Naive thymus-derived CD8-positive, alpha-beta T cell (primary cell): ENCODE measurements at regions of chr16 and their contacts with region 1.

Region 1: DNA sequence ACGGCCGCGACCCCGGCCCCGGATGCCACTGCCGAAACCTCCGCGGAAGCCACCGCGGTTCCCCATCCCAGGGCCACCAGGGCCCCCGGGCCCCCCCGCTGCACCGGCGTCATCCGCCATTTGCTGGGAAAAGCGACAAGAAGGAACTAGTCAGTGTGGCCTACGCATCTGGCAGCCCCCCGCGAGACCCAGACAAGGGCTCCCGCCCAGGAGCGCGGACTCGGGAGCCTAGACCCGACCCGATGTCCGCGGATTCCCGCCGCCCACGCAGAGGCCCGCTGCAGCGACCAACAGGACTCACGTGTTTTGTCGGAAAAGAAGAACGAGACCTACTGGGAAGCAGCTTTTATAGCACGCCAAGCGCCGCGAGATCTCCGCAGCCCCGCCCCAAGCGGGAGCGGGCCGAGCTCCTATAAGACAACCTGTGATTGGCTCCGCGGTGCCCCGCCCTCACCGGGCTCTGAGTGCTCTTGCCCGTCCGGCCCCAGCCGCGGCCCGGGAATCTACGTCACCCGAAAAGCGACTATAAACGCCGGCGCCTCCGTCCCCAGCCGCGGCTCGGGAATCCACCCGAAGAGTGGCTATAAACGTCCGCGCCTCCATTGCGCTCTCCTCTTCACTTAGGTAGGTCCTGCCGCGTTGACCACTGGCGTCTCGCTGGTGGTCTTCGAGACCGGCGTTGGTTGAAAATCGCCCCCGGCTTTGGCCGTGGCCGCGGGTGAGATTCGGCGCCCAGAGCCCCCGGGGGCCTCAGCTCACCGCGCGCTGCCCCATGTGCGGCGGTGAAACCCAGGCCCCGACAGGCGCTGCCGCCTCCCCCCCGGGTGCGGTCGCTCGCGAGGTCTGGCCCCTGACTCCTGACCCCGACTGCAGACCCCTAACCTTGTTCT is at the start of gene RPS2:
- DNase-seq: peak; percentile 95 to 100 (median 98)
- ATAC-seq: peak; percentile 88 to 93
- H3K4me3 Mint-ChIP-seq: peak within 1 kb of the TSS; percentile 89 to 97 (median 94)
- H3K27ac Mint-ChIP-seq: peak within 1 kb of the TSS; percentile 96 to 99 (median 97)
- H3K4me1 Mint-ChIP-seq: peaks cover 24 to 48% (median 48%) of the 10 kb centered on the region in 4 donors
- H3K27me3 Mint-ChIP-seq: no peaks in the 10 kb centered on the region
- polyA plus RNA-seq, gene RPS2: 6,506 to 7,644 (median 7,481) TPM

Region 2: GRCh38 chr16:1782352-1783091 is 182.2 kb before region 1 on chr16 and contains the starts of genes NUBP2 and SPSB3:
- POLR2A ChIA-PET with region 1: interaction called, 15 read pairs
- DNase-seq: peak; percentile 90 to 99 (median 97)
- ATAC-seq: peak; percentile 86 to 87
- H3K4me3 Mint-ChIP-seq: peak within 1 kb of the TSS; percentile 83 to 97 (median 93)
- H3K27ac Mint-ChIP-seq: peak within 1 kb of the TSS; percentile 82 to 99 (median 93)
- H3K4me1 Mint-ChIP-seq: peaks cover 8 to 52% (median 27%) of the 10 kb centered on the region in 4 donors
- H3K27me3 Mint-ChIP-seq: no peaks in the 10 kb centered on the region
- polyA plus RNA-seq, gene NUBP2: 87.2 to 90.6 (median 87.3) TPM
- polyA plus RNA-seq, gene SPSB3: 38.0 to 42.0 (median 40.8) TPM

Region 3: GRCh38 chr16:1983544-1984346 is 19.0 kb after region 1 on chr16 and contains the start of gene GFER:
- POLR2A ChIA-PET with region 1: interaction called, 89 read pairs
- DNase-seq: peak in 8 of 10 donors; percentile 48 to 75 (median 56)
- ATAC-seq: peak; percentile 62 to 74
- H3K4me3 Mint-ChIP-seq: peak within 1 kb of the TSS; percentile 74 to 89 (median 79)
- H3K27ac Mint-ChIP-seq: peak within 1 kb of the TSS; percentile 10 to 83 (median 74)
- H3K4me1 Mint-ChIP-seq: peaks cover 7 to 21% (median 16%) of the 10 kb centered on the region in 4 donors
- H3K27me3 Mint-ChIP-seq: peaks cover 1 to 38% (median 10%) of the 10 kb centered on the region in 5 donors
- polyA plus RNA-seq, gene GFER: 21.4 to 30.0 (median 26.3) TPM

Region 4: GRCh38 chr16:2003827-2004641 is 39.3 kb after region 1 on chr16:
- POLR2A ChIA-PET with region 1: interaction called, 17 read pairs
- DNase-seq: peak; percentile 68 to 89 (median 80)
- ATAC-seq: peak; percentile 90 to 93
- H3K4me3 Mint-ChIP-seq: no peak overlapping the region
- H3K27ac Mint-ChIP-seq: no peak overlapping the region
- H3K4me1 Mint-ChIP-seq: peaks cover 25 to 50% (median 42%) of the 10 kb centered on the region in 4 donors
- H3K27me3 Mint-ChIP-seq: no peaks in the 10 kb centered on the region

Region 5: GRCh38 chr16:2047330-2048115 is 82.8 kb after region 1 on chr16 and contains the starts of genes NTHL1 and TSC2:
- POLR2A ChIA-PET with region 1: interaction called, 13 read pairs
- DNase-seq: peak; percentile 83 to 95 (median 89)
- ATAC-seq: peak; percentile 92 to 97
- H3K4me3 Mint-ChIP-seq: peak within 1 kb of the TSS; percentile 85 to 96 (median 93)
- H3K27ac Mint-ChIP-seq: peak within 1 kb of the TSS; percentile 41 to 91 (median 78)
- H3K4me1 Mint-ChIP-seq: peaks cover 9 to 30% (median 21%) of the 10 kb centered on the region in 4 donors
- H3K27me3 Mint-ChIP-seq: no peaks in the 10 kb centered on the region
- polyA plus RNA-seq, gene NTHL1: 13.1 to 20.0 (median 16.6) TPM
- polyA plus RNA-seq, gene TSC2: 23.5 to 42.0 (median 27.2) TPM